GM18951 (cell line): ENCODE measurements at regions of chr3 and their contacts with region 1.

Region 1: DNA sequence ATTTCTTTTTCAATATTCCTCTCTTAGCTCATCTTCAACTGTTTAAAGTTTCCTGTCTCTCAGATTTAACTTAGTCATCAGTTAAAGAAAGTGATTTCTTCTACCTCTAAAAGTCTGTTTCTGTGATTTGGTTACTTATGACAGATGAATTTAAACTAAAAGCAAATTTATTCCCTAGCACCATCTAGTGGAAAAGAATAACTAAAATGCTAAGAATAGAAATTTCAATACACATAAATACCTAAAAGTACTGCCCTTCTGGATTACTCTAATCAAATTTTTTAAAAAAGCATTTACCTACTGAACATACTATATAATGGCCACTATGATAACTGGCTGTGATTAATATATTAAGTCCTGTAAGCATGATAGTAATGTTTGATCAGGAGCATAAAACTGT is 14.0 kb upstream of the ZCWPW2 start:
- POLR2A ChIP-seq: no peak

Region 2: DNA sequence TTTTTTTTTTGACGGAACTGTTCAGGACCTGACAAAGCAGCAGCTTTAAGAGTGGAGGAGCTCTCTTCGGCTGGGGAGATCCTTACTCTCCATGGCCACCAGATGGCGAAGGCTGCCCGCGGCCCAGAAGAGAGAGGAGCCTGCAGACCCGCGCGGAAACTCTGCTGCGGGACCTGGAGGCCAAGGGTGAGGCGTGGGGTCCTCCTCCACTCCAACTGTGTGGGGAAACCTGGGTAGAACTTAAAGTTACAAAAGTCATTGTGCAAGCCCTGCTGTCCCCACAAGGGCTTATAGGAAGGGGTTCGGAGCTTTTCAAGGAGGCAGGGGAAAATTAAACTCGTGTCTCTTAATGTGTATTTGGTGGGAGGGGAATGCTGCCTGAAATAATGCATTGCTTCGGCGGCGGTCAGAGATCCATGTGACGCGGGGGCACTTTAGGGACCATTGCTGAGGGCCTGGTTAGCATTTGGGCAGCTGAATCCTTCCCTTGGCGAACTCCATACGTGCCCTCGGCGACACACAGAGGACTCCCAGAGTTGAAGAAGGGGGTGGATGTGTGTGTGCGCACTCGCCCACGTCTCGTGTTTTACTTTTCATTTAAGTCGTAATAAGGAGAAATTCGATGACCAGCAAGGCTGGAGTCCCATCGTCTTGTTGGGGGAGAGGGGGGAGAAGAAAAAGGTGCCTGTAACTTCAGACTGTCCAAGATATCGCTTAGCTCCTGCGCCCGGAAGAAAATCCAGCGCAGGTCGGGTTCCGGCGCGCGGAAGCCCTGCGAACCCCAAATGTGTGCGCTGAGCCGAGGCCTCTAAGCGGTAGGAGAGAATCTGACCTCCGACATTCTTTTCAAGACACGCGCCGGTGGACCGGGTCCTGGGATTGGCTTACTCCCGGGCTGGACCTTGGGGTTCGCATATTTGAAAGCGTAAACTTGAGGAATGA is 622.1 kb before region 1 on chr3:
- in situ Hi-C with region 1: loop called (anchors 10 kb)
- POLR2A ChIP-seq: no peak

Region 3: GRCh38 chr3:27993051-27993450 is 341.5 kb before region 1 on chr3:
- in situ Hi-C with region 1: no loop called
- POLR2A ChIP-seq: no peak

Region 4: GRCh38 chr3:28286595-28286994 is 48.0 kb before region 1 on chr3:
- in situ Hi-C with region 1: no loop called
- POLR2A ChIP-seq: no peak